Activated T-helper 1 cell treated with anti-CD3 and anti-CD28 coated beads, Interleukin-12 subunit alpha, Interleukin-12 subunit beta, Interleukin-2, Interleukin-4 antibody, amounts not matched to agents 30 ng/mL and 10 ng/mL and 1 ng/mL, durations not matched to agents 14 hours and 24 hours and 36 hours (primary cell): ENCODE measurements at regions of chr11 and their contacts with region 1.

Region 1: GRCh38 chr11:727859-728748 is 19.2 kb upstream of the TALDO1 start:
- DNase-seq: peak; percentile 72
- H3K4me3 Mint-ChIP-seq: no peak overlapping the region
- H3K27ac Mint-ChIP-seq: no peak overlapping the region
- H3K4me1 Mint-ChIP-seq: peaks cover 6% of the 10 kb centered on the region
- H3K27me3 Mint-ChIP-seq: peaks cover 9% of the 10 kb centered on the region

Region 2: DNA sequence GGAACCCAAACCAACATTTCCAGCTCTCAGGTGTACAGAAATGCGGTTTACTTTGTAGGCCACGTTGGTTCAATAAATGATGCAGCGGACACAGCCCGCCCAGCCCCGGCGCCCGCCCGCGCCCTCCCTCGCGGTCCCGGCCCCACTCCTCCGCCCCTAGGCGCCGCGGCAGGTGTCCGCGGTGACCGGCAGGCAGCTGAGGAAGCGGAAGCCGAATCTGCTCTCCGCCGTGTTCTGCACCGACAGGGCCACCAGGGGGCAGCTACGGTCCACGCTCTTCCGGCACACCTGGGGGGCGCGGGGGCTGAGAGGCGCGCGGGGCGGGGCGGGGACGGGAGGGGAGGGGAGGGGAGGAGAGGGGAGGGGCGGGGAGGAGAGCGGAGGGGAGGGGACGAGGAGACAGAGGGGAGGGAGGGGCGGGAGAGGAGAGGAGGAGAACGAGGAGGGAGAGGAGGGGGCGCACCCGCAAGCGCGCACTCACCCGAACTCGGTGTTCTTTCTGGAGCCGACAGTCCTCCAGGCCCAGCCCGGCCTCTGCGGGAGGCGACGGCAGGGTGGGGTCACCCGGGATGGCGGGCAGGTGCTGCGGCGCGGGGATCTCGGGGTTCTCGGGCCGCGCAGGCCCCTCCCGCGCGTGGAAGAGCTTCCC is 173.2 kb before region 1 on chr11:
- intact Hi-C with region 1: loop called (anchors 1 kb)
- DNase-seq: peak; percentile 71
- H3K4me3 Mint-ChIP-seq: no peak overlapping the region
- H3K27ac Mint-ChIP-seq: no peak overlapping the region
- H3K4me1 Mint-ChIP-seq: peaks cover 4% of the 10 kb centered on the region
- H3K27me3 Mint-ChIP-seq: peaks cover 10% of the 10 kb centered on the region

Region 3: GRCh38 chr11:615504-616319 is 112.4 kb before region 1 on chr11 and contains the start of gene IRF7:
- intact Hi-C with region 1: loop called (anchors 1 kb)
- DNase-seq: peak; percentile 88
- H3K4me3 Mint-ChIP-seq: peak within 1 kb of the TSS; percentile 86
- H3K27ac Mint-ChIP-seq: peak within 1 kb of the TSS; percentile 85
- H3K4me1 Mint-ChIP-seq: peaks cover 7% of the 10 kb centered on the region
- H3K27me3 Mint-ChIP-seq: no peaks in the 10 kb centered on the region
- total RNA-seq, gene IRF7: 56.6 and 63.1 TPM in 2 replicates

Region 4: DNA sequence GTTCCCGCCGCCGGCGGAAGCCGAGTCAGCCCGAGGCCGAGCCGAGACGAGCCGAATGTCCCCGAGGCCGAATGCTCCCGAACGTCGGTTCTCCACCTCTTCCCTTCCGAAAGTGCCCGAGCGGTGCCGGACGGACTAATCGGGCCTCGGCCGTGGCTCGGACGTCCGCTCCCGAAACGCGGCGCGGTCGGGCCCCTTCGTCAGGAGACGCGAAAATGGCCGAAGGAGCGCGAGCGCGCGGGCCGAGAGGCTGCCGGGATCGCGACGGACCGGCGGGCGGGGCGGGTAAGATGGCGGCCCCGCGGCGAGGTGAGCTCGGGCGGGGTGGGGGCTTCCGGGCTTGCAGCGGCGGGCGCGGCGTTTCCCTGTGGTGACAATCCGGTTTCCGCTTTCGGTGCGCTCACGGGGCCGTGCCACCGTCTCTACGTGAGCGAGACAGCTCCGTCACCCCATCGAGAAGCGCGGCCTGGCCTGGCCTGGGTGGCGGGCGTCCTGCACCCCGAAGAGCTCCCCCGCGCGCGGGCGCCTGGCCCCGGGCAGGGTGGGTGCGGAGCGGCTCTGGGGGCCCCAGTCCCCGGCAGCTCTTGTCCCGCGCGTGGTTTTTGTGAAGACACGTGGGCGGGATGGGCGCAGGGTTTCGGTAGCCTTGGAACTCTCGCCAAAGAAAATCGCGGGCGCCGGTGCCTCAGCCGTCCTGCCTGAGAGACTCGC is 32.4 kb before region 1 on chr11 and contains the start of gene TMEM80:
- intact Hi-C with region 1: loop called (anchors 1 kb)
- DNase-seq: peak; percentile 98
- H3K4me3 Mint-ChIP-seq: peak within 1 kb of the TSS; percentile 88
- H3K27ac Mint-ChIP-seq: peak within 1 kb of the TSS; percentile 93
- H3K4me1 Mint-ChIP-seq: peaks cover 49% of the 10 kb centered on the region
- H3K27me3 Mint-ChIP-seq: peaks cover 2% of the 10 kb centered on the region
- total RNA-seq, gene TMEM80: 14.2 and 14.7 TPM in 2 replicates

Region 5: GRCh38 chr11:765025-765801 is 37.1 kb after region 1 on chr11:
- intact Hi-C with region 1: loop called (anchors 1 kb)
- DNase-seq: peak; percentile 45
- H3K4me3 Mint-ChIP-seq: no peak overlapping the region
- H3K27ac Mint-ChIP-seq: no peak overlapping the region
- H3K4me1 Mint-ChIP-seq: peaks cover 10% of the 10 kb centered on the region
- H3K27me3 Mint-ChIP-seq: no peaks in the 10 kb centered on the region